ENCODE measurements at regions of chr19 and their contacts with region 1.

Region 1: GRCh38 chr19:7318176-7318575 is 24.0 kb upstream of the INSR start:
- DNase-seq: no peak
- H3K4me3 ChIP-seq: no peak overlapping the region
- H3K27ac ChIP-seq: no peak overlapping the region
- H3K4me1 ChIP-seq: no peaks in the 10 kb centered on the region
- H3K27me3 ChIP-seq: no peaks in the 10 kb centered on the region
- CTCF ChIP-seq: no peak
- EP300 ChIP-seq: no peak
- POLR2A ChIP-seq: no peak

Region 2: DNA sequence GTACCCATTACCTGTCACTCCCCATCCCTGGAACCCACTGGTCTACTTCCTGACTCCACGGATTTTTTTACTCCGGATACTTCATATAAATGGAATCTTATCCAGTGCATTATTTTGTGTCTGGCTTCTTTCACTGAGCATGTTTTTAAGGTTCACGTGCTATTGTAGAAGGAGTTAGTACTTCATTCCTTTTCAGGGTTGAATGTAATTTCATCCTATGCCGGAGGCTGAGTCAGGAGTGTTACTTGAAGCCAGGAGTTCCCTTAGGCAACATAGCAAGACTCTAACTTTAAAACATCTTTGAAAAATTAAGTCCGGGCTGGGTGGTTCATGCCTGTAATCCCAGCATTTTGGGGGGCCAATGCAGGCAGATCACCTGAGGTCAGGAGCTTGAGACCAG is 705.2 kb after region 1 on chr19:
- in situ Hi-C with region 1: no loop called
- intact Hi-C with region 1: loop called (anchors 5 kb)
- DNase-seq: no peak
- H3K4me3 ChIP-seq: no peak overlapping the region
- H3K27ac ChIP-seq: no peak overlapping the region
- H3K4me1 ChIP-seq: no peaks in the 10 kb centered on the region
- H3K27me3 ChIP-seq: no peaks in the 10 kb centered on the region
- CTCF ChIP-seq: no peak
- EP300 ChIP-seq: no peak
- POLR2A ChIP-seq: no peak